Heart left ventricle (tissue), 16 donors: ENCODE measurements at regions of chrX and their contacts with region 1.

Region 1: GRCh38 chrX:13515211-13515930 is 54.0 kb upstream of the EGFL6 start:
- DNase-seq: no peak
- ATAC-seq: no peak
- H3K4me3 ChIP-seq: no peak overlapping the region
- H3K27ac ChIP-seq: no peak overlapping the region
- H3K4me1 ChIP-seq: no peaks in the 10 kb centered on the region
- H3K27me3 ChIP-seq: peaks cover 0 to 19% (median 0%) of the 10 kb centered on the region in 9 donors
- CTCF ChIP-seq: no peak
- POLR2A ChIP-seq: no peak

Region 2: GRCh38 chrX:13622401-13622957 is 107.1 kb after region 1 on chrX:
- intact Hi-C with region 1: no loop called
- DNase-seq: no peak
- ATAC-seq: no peak
- H3K4me3 ChIP-seq: no peak overlapping the region
- H3K27ac ChIP-seq: no peak overlapping the region
- H3K4me1 ChIP-seq: no peaks in the 10 kb centered on the region
- H3K27me3 ChIP-seq: peaks cover 0 to 12% (median 0%) of the 10 kb centered on the region in 9 donors
- CTCF ChIP-seq: no peak
- POLR2A ChIP-seq: no peak

Region 3: GRCh38 chrX:13638826-13639225 is 123.5 kb after region 1 on chrX:
- intact Hi-C with region 1: loop called in 1 of 10 experiments (anchors 5 kb)
- DNase-seq: no peak
- ATAC-seq: no peak
- H3K4me3 ChIP-seq: no peak overlapping the region
- H3K27ac ChIP-seq: no peak overlapping the region
- H3K4me1 ChIP-seq: no peaks in the 10 kb centered on the region
- H3K27me3 ChIP-seq: peaks cover 0 to 21% (median 0%) of the 10 kb centered on the region in 9 donors
- CTCF ChIP-seq: no peak
- POLR2A ChIP-seq: no peak